CD4-positive, alpha-beta memory T cell (primary cell): ENCODE measurements at regions of chr19 and their contacts with region 1.

Region 1: DNA sequence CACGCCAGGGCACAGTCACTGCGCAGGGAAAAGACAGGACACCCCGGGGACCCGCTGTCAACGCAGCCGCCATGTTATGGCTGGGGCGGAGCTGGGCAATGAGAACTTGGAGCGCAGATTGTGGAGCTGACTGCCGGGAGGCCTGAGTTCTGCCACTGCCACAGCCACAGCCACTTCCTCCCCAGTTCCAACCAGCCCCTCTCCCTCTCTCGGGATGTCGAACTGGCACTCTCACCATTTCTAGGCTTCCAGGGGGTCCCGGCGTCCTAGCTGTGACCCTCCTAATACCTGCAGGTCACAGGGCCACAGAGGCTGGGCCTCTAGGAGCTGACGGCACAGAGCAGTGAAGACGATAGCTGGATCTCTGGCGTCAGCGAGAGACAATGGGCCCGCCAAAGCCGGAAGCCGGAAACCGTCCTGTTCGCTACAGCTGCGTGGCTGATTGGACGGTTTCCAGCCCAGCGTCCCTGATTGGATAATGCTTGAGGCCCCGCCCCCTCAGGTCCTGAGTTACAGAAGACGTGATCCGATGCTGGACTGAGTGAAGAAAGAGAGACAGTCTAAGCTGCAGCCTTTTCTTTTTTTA is at the start of gene ZNF506:
- DNase-seq: peak; percentile 96 to 98 (median 97)
- H3K4me3 ChIP-seq: peak within 1 kb of the TSS; percentile 69 to 84
- H3K4me3 Mint-ChIP-seq: peak within 1 kb of the TSS; percentile 98 to 100 (median 100)
- H3K27ac ChIP-seq: peak within 1 kb of the TSS; percentile 97
- H3K27ac Mint-ChIP-seq: peak within 1 kb of the TSS; percentile 100
- H3K4me1 ChIP-seq: peaks cover 41% of the 10 kb centered on the region
- H3K4me1 Mint-ChIP-seq: peaks cover 14 to 50% (median 32%) of the 10 kb centered on the region in 4 donors
- H3K27me3 ChIP-seq: no peaks in the 10 kb centered on the region
- H3K27me3 Mint-ChIP-seq: no peaks in the 10 kb centered on the region
- total RNA-seq, gene ZNF506: 76.4 to 80.5 TPM

Region 2: GRCh38 chr19:19562665-19563347 is 258.7 kb before region 1 on chr19:
- CTCF ChIA-PET with region 1: no interaction called
- POLR2A ChIA-PET with region 1: no interaction called
- intact Hi-C with region 1: loop called (anchors 1 kb)
- DNase-seq: peak in 4 of 5 donors; percentile 33 to 45 (median 43)
- H3K4me3 ChIP-seq: no peak overlapping the region
- H3K4me3 Mint-ChIP-seq: no peak overlapping the region
- H3K27ac ChIP-seq: no peak overlapping the region
- H3K27ac Mint-ChIP-seq: peak overlapping the region in 4 of 7 donors; percentile 5 to 74 (median 58)
- H3K4me1 ChIP-seq: peaks cover 16% of the 10 kb centered on the region
- H3K4me1 Mint-ChIP-seq: peaks cover 15 to 30% (median 20%) of the 10 kb centered on the region in 4 donors
- H3K27me3 ChIP-seq: no peaks in the 10 kb centered on the region
- H3K27me3 Mint-ChIP-seq: no peaks in the 10 kb centered on the region

Region 3: DNA sequence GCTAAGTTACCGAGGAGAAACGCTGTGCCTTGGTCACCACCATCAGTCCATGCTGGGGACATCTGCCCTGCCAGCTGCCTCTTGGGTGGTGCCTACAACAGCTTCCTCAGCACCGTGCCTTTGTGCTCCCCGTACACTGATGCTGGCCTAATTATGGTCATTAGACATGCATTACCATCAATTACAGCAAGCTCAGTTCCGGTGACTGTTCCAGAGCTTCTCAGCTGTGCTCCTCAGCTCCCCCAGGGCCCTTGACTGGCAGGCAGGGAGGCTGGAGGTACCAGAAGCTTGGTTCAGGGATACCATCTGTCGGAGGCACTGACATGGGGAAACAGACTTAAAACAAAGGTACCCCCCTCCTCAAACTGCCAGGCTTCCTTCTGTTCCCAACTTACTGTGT is 243.2 kb before region 1 on chr19:
- CTCF ChIA-PET with region 1: no interaction called
- POLR2A ChIA-PET with region 1: no interaction called
- intact Hi-C with region 1: no loop called
- DNase-seq: no peak
- H3K4me3 ChIP-seq: no peak overlapping the region
- H3K4me3 Mint-ChIP-seq: no peak overlapping the region
- H3K27ac ChIP-seq: no peak overlapping the region
- H3K27ac Mint-ChIP-seq: peak overlapping the region in 1 of 7 donors; percentile 25
- H3K4me1 ChIP-seq: peaks cover 7% of the 10 kb centered on the region
- H3K4me1 Mint-ChIP-seq: peaks cover 9 to 22% (median 17%) of the 10 kb centered on the region in 4 donors
- H3K27me3 ChIP-seq: no peaks in the 10 kb centered on the region
- H3K27me3 Mint-ChIP-seq: no peaks in the 10 kb centered on the region

Region 4: GRCh38 chr19:19732579-19733501 is 88.6 kb before region 1 on chr19 and contains the start of gene ZNF14:
- CTCF ChIA-PET with region 1: no interaction called
- POLR2A ChIA-PET with region 1: interaction called, 30 read pairs
- intact Hi-C with region 1: loop called (anchors 2 kb)
- DNase-seq: peak; percentile 87 to 94 (median 88)
- H3K4me3 ChIP-seq: peak within 1 kb of the TSS; percentile 59 to 81
- H3K4me3 Mint-ChIP-seq: peak within 1 kb of the TSS; percentile 95 to 100 (median 98)
- H3K27ac ChIP-seq: peak within 1 kb of the TSS; percentile 72
- H3K27ac Mint-ChIP-seq: peak within 1 kb of the TSS; percentile 93 to 99 (median 98)
- H3K4me1 ChIP-seq: peaks cover 18% of the 10 kb centered on the region
- H3K4me1 Mint-ChIP-seq: peaks cover 11 to 40% (median 24%) of the 10 kb centered on the region in 4 donors
- H3K27me3 ChIP-seq: no peaks in the 10 kb centered on the region
- H3K27me3 Mint-ChIP-seq: no peaks in the 10 kb centered on the region
- total RNA-seq, gene ZNF14: 31.2 to 32.2 TPM

Region 5: GRCh38 chr19:19860756-19861390 is 39.4 kb after region 1 on chr19:
- CTCF ChIA-PET with region 1: interaction called, 6 read pairs
- POLR2A ChIA-PET with region 1: interaction called, 132 read pairs
- intact Hi-C with region 1: loop called (anchors 1 kb)
- DNase-seq: peak; percentile 50 to 77 (median 61)
- H3K4me3 ChIP-seq: no peak overlapping the region
- H3K4me3 Mint-ChIP-seq: peak overlapping the region; percentile 31 to 85 (median 54)
- H3K27ac ChIP-seq: no peak overlapping the region
- H3K27ac Mint-ChIP-seq: peak overlapping the region in 2 of 7 donors; percentile 53 to 86
- H3K4me1 ChIP-seq: no peaks in the 10 kb centered on the region
- H3K4me1 Mint-ChIP-seq: peaks cover 2 to 14% (median 8%) of the 10 kb centered on the region in 4 donors
- H3K27me3 ChIP-seq: no peaks in the 10 kb centered on the region
- H3K27me3 Mint-ChIP-seq: peaks cover 0 to 1% of the 10 kb centered on the region in 2 donors

Region 6: DNA sequence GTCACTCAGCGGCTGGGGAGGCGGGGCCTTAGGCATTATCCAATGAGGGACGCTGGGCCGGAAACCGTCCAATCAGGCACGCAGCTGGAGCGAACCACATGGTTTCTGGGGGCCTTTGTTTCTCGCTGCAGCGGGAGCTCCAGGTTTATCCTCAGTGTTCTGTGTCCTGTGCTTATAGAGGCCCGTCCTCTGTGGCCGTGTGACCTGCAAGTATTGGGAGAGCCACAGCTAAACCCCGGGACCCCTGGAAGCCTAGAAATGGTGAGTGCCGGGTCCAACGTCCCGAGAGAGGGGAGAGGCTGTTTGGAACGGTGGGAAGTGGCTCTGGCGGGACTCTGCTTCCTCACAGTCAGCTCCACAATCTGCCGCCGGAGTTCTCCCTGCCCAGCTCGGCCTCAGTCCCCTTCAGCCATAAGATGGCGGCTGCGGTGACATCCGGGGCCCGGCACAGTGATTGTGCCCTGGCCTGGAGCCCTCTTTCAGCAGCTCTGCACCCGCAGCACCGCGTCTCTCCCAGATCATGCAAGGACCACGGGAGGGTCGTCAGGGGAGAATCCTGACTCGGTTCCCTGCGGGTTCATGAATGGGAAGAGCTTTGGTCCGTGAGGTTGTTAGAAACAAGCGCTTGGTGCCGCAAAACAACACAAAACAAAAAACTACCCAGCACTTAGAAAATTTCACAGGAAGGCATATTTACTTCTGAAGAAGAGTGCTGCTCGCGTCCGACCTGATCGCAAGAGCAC is 44.5 kb after region 1 on chr19 and contains the start of gene ZNF253:
- CTCF ChIA-PET with region 1: interaction called, 6 read pairs
- POLR2A ChIA-PET with region 1: interaction called, 132 read pairs
- intact Hi-C with region 1: loop called (anchors 1 kb)
- DNase-seq: peak; percentile 91 to 97 (median 91)
- H3K4me3 ChIP-seq: peak within 1 kb of the TSS; percentile 92
- H3K4me3 Mint-ChIP-seq: peak within 1 kb of the TSS; percentile 99 to 100 (median 100)
- H3K27ac ChIP-seq: peak within 1 kb of the TSS; percentile 75
- H3K27ac Mint-ChIP-seq: peak within 1 kb of the TSS; percentile 98 to 99 (median 98)
- H3K4me1 ChIP-seq: peaks cover 30% of the 10 kb centered on the region
- H3K4me1 Mint-ChIP-seq: peaks cover 18 to 50% (median 29%) of the 10 kb centered on the region in 4 donors
- H3K27me3 ChIP-seq: no peaks in the 10 kb centered on the region
- H3K27me3 Mint-ChIP-seq: no peaks in the 10 kb centered on the region
- total RNA-seq, gene ZNF253: 23.8 to 25.8 TPM

Region 7: GRCh38 chr19:19871932-19872331 is 50.5 kb after region 1 on chr19:
- CTCF ChIA-PET with region 1: interaction called, 5 read pairs
- POLR2A ChIA-PET with region 1: interaction called, 132 read pairs
- intact Hi-C with region 1: no loop called
- DNase-seq: no peak
- H3K4me3 ChIP-seq: no peak overlapping the region
- H3K4me3 Mint-ChIP-seq: peak overlapping the region in 3 of 8 donors; percentile 18 to 38 (median 27)
- H3K27ac ChIP-seq: peak overlapping the region; percentile 1
- H3K27ac Mint-ChIP-seq: peak overlapping the region in 4 of 7 donors; percentile 0 to 70 (median 31)
- H3K4me1 ChIP-seq: peaks cover 39% of the 10 kb centered on the region
- H3K4me1 Mint-ChIP-seq: peaks cover 35 to 50% (median 40%) of the 10 kb centered on the region in 4 donors
- H3K27me3 ChIP-seq: no peaks in the 10 kb centered on the region
- H3K27me3 Mint-ChIP-seq: no peaks in the 10 kb centered on the region

Region 8: DNA sequence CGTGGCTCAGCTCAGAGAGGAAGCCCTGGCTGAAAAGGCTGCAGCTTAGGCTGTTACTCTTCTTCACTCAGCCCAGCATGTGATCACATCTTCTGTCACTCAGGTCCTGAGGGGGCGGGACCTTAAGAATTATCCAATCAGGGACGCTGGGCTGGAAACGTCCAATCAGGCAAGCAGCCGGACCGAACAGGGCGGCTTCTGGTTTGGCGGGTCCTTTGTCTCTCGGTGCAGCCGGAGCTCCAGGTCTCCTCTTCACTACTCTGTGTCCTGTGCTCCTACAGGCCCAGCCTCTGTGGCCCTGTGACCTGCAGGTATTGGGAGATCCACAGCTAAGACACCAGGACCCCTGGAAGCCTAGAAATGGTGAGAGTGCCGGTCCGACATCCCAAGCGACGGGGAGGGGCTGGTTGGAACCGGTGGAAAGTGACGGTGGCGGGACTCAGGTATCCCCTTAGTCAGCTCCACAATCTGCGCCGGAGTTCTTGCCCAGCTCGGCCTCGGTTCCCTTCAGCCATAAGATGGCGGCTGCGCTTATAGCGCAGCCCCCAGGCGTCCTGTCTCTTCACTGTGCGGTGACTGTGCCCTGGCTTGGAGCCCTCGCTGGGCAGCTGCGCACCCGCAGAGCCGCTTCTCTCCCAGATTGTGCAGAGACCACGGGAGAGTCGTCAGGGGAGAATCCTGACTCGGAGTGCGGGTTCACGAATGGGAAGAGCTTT is 79.4 kb after region 1 on chr19 and contains the start of gene ZNF93:
- CTCF ChIA-PET with region 1: interaction called, 3 read pairs
- POLR2A ChIA-PET with region 1: interaction called, 45 read pairs
- intact Hi-C with region 1: loop called (anchors 1 kb)
- DNase-seq: peak; percentile 90 to 96 (median 92)
- H3K4me3 ChIP-seq: peak within 1 kb of the TSS; percentile 79 to 82
- H3K4me3 Mint-ChIP-seq: peak within 1 kb of the TSS; percentile 96 to 99 (median 98)
- H3K27ac ChIP-seq: peak within 1 kb of the TSS; percentile 66
- H3K27ac Mint-ChIP-seq: peak within 1 kb of the TSS; percentile 80 to 97 (median 93)
- H3K4me1 ChIP-seq: peaks cover 15% of the 10 kb centered on the region
- H3K4me1 Mint-ChIP-seq: peaks cover 12 to 34% (median 24%) of the 10 kb centered on the region in 4 donors
- H3K27me3 ChIP-seq: no peaks in the 10 kb centered on the region
- H3K27me3 Mint-ChIP-seq: no peaks in the 10 kb centered on the region
- total RNA-seq, gene ZNF93: 8.8 to 9.2 TPM

Region 9: DNA sequence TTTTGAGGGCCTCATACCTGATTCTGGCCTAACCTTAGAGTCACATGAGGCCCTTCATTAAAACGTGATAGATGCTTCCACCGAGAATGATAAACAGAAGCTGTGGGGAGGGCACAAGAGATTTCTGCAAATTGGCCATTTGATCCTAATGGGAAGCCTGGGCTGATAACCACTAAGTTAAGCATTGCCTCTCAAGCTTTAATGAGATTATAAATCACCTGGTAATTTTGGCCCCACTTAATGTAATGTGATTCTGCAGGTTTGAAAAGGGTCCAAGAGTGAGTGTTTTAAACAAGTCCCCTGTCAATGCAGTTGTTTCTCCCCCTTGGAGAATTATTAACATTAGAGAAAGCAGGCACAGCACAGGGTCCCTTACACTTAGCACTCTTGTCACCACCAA is 387.6 kb after region 1 on chr19:
- CTCF ChIA-PET with region 1: no interaction called
- POLR2A ChIA-PET with region 1: no interaction called
- intact Hi-C with region 1: no loop called
- DNase-seq: no peak
- H3K4me3 ChIP-seq: no peak overlapping the region
- H3K4me3 Mint-ChIP-seq: no peak overlapping the region
- H3K27ac ChIP-seq: no peak overlapping the region
- H3K27ac Mint-ChIP-seq: no peak overlapping the region
- H3K4me1 ChIP-seq: no peaks in the 10 kb centered on the region
- H3K4me1 Mint-ChIP-seq: no peaks in the 10 kb centered on the region
- H3K27me3 ChIP-seq: no peaks in the 10 kb centered on the region
- H3K27me3 Mint-ChIP-seq: no peaks in the 10 kb centered on the region